Vagina (tissue), 2 donors: ENCODE measurements at regions of chr10 and their contacts with region 1.

Region 1: GRCh38 chr10:124087672-124088634 is 5.4 kb downstream of the CHST15 start:
- DNase-seq: no peak
- H3K4me3 ChIP-seq: no peak overlapping the region
- H3K27ac ChIP-seq: no peak overlapping the region
- H3K4me1 ChIP-seq: peaks cover 38% of the 10 kb centered on the region
- H3K27me3 ChIP-seq: no peaks in the 10 kb centered on the region
- CTCF ChIP-seq: no peak
- POLR2A ChIP-seq: no peak

Region 2: GRCh38 chr10:124035928-124036558 is 51.9 kb before region 1 on chr10:
- intact Hi-C with region 1: loop called (anchors 10 kb)
- DNase-seq: no peak
- H3K4me3 ChIP-seq: no peak overlapping the region
- H3K27ac ChIP-seq: no peak overlapping the region
- H3K4me1 ChIP-seq: peaks cover 10% of the 10 kb centered on the region
- H3K27me3 ChIP-seq: no peaks in the 10 kb centered on the region
- CTCF ChIP-seq: no peak
- POLR2A ChIP-seq: no peak